ENCODE measurements at regions of chr6 and their contacts with region 1.

Region 1: DNA sequence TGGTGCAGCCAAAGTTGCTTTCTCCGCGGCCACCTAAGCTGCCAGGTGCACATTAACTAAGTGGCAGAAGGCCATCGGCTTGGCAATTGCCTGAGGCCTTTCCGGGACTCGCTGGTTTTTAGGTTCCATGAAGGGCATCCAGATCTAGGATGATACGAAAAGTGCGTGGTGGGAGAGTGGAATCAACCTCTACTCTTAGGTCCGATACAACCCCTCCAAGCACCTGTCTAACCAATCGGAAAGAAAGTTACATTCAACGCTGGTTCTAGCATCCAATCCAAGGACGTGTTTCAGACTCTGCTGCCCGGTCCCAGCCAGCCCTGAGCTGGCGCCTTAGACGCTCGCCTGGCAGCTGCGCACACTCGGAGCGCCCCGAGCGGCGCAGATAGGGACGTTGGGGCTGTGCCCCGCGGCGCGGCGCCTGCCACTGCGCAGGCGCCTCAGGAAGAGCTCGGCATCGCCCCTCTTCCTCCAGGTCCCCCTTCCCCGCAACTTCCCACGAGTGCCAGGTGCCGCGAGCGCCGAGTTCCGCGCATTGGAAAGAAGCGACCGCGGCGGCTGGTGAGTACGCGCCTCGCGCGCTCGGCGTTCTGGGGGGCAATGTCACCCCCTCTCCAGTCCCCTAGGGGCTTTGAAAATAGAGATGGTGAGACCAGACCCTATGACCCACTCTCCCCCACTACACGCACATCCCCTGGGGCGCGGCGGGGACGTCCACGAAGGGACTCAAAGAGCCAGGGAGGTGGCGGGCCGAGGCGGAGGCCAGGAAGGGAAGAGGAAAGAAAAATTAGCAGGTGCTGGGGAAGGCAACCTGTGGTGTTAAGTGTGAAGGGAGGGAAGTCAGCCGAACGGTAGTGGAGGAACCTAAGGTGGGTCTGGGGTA is at the start of gene ENPP4:
- DNase-seq: peak; percentile 98
- H3K4me3 Mint-ChIP-seq: peak within 1 kb of the TSS; percentile 89
- H3K27ac Mint-ChIP-seq: peak within 1 kb of the TSS; percentile 83
- H3K4me1 Mint-ChIP-seq: peaks cover 20% of the 10 kb centered on the region
- H3K27me3 Mint-ChIP-seq: peaks cover 5% of the 10 kb centered on the region
- total RNA-seq, gene ENPP4: 5.3 and 6.0 TPM in 2 replicates

Region 2: DNA sequence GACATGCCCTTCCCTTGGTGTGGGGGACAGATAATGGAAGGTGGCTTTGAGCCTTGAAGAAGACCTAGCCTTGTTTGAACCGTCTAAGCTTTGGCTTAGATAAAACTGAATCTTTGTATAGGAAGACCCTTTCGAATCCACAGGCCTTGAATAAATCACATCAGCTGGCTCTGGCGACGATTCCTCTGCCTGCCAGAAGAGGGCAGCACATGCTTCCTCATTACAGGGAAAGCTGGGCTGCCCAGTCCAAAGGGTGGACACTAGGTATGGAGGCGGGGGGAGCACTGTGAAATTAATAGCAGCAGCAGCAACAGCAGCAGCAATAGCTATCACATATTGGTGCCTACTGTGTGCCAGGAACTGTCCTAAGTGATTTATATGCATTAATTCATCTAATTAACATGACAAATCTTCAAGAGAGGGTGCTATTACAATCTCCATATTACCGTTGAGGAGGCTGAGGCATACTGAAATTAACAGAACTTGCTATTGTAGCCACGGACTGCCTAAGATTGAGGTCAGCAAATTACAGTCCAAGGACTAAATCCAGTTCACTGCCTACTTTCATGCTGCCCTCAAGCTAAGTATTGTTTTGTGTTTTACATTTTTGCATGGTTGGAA is 199.3 kb before region 1 on chr6:
- intact Hi-C with region 1: loop called (anchors 10 kb)
- DNase-seq: peak; percentile 86
- H3K4me3 Mint-ChIP-seq: no peak overlapping the region
- H3K27ac Mint-ChIP-seq: no peak overlapping the region
- H3K4me1 Mint-ChIP-seq: peaks cover 7% of the 10 kb centered on the region
- H3K27me3 Mint-ChIP-seq: no peaks in the 10 kb centered on the region

Region 3: GRCh38 chr6:46175446-46175845 is 45.6 kb after region 1 on chr6:
- intact Hi-C with region 1: loop called (anchors 1 kb)
- DNase-seq: peak; percentile 76
- H3K4me3 Mint-ChIP-seq: no peak overlapping the region
- H3K27ac Mint-ChIP-seq: no peak overlapping the region
- H3K4me1 Mint-ChIP-seq: peaks cover 18% of the 10 kb centered on the region
- H3K27me3 Mint-ChIP-seq: peaks cover 67% of the 10 kb centered on the region